ENCODE measurements at regions of chr1 and their contacts with region 1.

Region 1: GRCh38 chr1:176682830-176683535 is 220.0 kb downstream of the PAPPA2 start:
- DNase-seq: no peak
- ATAC-seq: no peak
- H3K4me3 ChIP-seq: no peak overlapping the region
- H3K27ac ChIP-seq: no peak overlapping the region
- H3K4me1 ChIP-seq: peaks cover 0 to 4% (median 0%) of the 10 kb centered on the region in 9 donors
- H3K27me3 ChIP-seq: peaks cover 0 to 4% (median 0%) of the 10 kb centered on the region in 7 donors
- CTCF ChIP-seq: no peak

Region 2: GRCh38 chr1:176577646-176578197 is 105.3 kb before region 1 on chr1:
- intact Hi-C with region 1: loop called in 1 of 10 experiments (anchors 10 kb)
- DNase-seq: no peak
- ATAC-seq: no peak
- H3K4me3 ChIP-seq: no peak overlapping the region
- H3K27ac ChIP-seq: no peak overlapping the region
- H3K4me1 ChIP-seq: no peaks in the 10 kb centered on the region
- H3K27me3 ChIP-seq: no peaks in the 10 kb centered on the region
- CTCF ChIP-seq: no peak